ENCODE measurements at regions of chrX and their contacts with region 1.

Region 1: DNA sequence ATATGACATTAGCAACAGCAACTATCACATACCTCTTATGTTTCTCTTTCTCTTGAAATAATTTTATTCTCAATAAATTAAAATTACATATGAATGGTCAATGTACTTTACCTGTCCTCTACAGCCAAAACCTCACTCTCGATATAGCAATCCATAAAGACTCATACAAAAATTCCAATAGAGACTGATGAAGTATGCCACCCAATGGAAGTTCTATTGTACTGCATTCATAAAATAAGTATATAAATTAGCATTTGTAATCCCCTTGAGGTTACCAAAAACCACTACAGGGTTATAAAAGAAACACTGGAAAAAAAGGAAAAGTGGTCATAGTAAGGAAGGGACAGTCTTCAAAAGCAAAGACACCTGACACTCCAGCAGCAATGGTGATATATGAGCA is 32.8 kb downstream of the CLDN2 start:
- DNase-seq: no peak
- ATAC-seq: peak; percentile 48
- H3K4me3 ChIP-seq: no peak overlapping the region
- H3K27ac ChIP-seq: no peak overlapping the region
- H3K4me1 ChIP-seq: no peaks in the 10 kb centered on the region
- H3K27me3 ChIP-seq: peaks cover 0 to 12% of the 10 kb centered on the region in 2 donors
- CTCF ChIP-seq: no peak

Region 2: GRCh38 chrX:106707771-106708454 is 245.1 kb before region 1 on chrX:
- intact Hi-C with region 1: no loop called
- DNase-seq: no peak
- ATAC-seq: peak; percentile 76
- H3K4me3 ChIP-seq: no peak overlapping the region
- H3K27ac ChIP-seq: no peak overlapping the region
- H3K4me1 ChIP-seq: no peaks in the 10 kb centered on the region
- H3K27me3 ChIP-seq: no peaks in the 10 kb centered on the region
- CTCF ChIP-seq: no peak

Region 3: DNA sequence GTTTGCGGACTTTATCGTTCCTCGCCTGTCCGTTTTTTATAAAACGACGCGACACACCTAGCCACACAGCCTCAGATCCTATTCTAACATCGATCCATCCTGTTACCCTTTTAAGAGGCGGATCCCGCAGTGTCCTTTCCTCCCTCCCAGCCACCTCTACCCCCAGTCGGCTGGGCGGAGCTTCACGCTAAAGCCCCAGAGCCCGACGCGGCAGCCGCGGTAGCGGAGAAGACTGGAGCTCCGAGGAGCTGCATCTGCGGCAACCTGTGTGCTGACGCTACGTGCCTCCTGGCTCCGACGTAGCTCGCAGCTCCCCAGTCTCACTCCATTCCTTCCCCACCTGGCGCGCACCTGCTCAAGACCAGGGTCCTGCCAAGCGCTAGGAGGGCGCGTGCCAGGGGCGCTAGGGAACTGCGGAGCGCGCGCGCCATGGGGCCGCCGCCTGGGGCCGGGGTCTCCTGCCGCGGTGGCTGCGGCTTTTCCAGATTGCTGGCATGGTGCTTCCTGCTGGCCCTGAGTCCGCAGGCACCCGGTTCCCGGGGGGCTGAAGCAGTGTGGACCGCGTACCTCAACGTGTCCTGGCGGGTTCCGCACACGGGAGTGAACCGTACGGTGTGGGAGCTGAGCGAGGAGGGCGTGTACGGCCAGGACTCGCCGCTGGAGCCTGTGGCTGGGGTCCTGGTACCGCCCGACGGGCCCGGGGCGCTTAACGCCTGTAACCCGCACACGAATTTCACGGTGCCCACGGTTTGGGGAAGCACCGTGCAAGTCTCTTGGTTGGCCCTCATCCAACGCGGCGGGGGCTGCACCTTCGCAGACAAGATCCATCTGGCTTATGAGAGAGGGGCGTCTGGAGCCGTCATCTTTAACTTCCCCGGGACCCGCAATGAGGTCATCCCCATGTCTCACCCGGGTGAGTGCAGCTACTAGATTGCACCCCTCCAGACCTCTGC is 226.2 kb before region 1 on chrX and contains the start of gene RNF128:
- intact Hi-C with region 1: no loop called
- DNase-seq: peak in 3 of 4 donors; percentile 27 to 82 (median 59)
- ATAC-seq: peak; percentile 89
- H3K4me3 ChIP-seq: peak within 1 kb of the TSS; percentile 28 to 37
- H3K27ac ChIP-seq: peak within 1 kb of the TSS; percentile 41 to 63
- H3K4me1 ChIP-seq: no peaks in the 10 kb centered on the region
- H3K27me3 ChIP-seq: peaks cover 14 to 23% of the 10 kb centered on the region in 2 donors
- CTCF ChIP-seq: no peak
- polyA plus RNA-seq, gene RNF128: 0.86 to 2.9 (median 1.5) TPM

Region 4: DNA sequence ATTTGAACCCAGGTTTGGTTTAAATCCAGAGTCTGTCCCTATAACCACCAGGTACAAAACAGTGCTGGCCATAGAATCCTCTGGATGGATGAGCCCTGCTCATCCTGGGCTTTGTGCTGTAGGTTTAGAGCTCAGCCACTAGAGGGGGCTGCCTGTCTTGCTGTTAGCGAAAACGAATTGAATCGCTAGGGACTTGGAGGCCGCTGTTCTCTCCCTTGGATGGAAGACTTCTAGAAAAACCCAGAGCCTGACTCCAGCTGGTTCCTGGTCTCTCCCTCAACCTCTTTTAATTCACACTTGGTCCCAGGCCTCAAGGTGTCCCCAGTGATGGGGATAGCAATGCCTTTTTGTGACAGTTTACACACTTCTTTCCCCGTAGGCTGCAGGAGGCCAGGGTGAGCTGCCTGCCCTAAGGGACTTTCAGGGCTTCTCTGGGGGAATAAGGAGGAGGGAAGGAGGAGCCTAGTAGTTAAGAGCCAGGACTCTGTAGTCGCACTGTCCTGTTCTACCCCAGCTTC is 58.5 kb before region 1 on chrX:
- intact Hi-C with region 1: loop called in 1 of 2 experiments (anchors 10 kb)
- DNase-seq: peak in 3 of 4 donors; percentile 38 to 63 (median 57)
- ATAC-seq: peak; percentile 94
- H3K4me3 ChIP-seq: no peak overlapping the region
- H3K27ac ChIP-seq: no peak overlapping the region
- H3K4me1 ChIP-seq: no peaks in the 10 kb centered on the region
- H3K27me3 ChIP-seq: no peaks in the 10 kb centered on the region
- CTCF ChIP-seq: peak; percentile 62 to 82

Region 5: DNA sequence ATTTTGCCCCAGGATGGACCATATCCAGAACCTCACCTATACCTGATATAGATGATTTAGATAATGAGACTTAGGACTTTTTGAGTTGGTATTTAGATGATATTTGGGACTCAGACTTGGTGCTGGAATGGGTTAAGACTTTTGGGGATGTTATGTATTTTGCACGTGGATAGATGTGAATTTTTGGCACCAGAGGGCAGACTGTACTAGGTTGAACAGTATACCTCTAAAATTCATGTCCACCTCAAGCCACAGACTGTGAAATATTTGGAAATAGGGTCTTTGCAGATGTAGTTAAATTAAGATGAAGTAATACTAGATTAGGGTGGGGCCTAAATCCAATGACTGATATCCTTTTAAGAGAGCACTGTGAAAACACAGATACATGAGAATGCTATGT is 150.0 kb after region 1 on chrX:
- intact Hi-C with region 1: no loop called
- DNase-seq: no peak
- ATAC-seq: no peak
- H3K4me3 ChIP-seq: no peak overlapping the region
- H3K27ac ChIP-seq: no peak overlapping the region
- H3K4me1 ChIP-seq: no peaks in the 10 kb centered on the region
- H3K27me3 ChIP-seq: no peaks in the 10 kb centered on the region
- CTCF ChIP-seq: no peak